IMR-90 (cell line): ENCODE measurements at regions of chr1 and their contacts with region 1.

Region 1: DNA sequence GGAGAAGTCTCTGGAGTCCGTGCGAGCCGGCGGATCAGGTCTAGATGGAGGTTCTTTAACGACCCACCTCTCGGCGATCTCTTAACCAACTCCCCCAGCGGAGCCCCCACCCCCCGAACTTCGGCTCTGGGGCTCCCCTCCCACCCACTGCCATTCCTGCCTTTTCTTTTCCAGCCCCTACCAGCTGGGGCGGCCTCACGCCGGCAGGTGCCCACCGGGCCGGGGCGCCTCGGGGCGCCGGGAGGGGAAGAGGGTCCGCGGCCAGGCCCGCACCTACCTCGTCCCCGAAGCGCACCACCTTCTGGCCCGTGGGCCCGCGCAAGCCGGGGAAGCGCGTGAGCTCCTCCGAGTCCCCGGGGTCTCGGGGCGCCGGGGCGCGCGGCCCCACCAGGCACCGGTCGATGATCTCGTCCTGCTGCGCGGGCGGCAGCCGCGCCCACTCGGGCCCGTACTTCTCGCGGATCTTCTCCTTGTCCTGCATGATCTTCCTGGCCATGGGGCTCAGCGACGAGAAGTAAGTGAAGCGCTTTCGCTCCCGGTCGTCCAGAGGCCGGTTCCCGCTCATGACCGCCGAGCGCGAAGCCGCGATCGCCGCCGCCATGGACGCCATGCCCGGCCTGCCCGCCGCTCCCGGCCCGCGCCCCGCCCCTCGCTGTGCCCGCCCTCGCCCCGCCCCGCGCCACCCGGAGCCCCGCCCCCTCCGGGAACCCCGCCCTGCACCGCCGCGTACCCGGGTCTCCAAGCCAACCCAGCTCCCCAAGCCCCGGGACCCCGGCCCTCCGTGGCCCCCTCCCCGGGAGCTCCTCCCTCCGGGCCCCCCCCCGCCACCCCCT is at the start of gene C1orf198:
- DNase-seq: no peak
- ATAC-seq: peak; percentile 84
- H3K4me3 ChIP-seq: peak within 1 kb of the TSS; percentile 100
- H3K27ac ChIP-seq: peak within 1 kb of the TSS; percentile 100
- H3K4me1 ChIP-seq: peaks cover 28% of the 10 kb centered on the region
- H3K27me3 ChIP-seq: no peaks in the 10 kb centered on the region
- CTCF ChIP-seq: no peak
- POLR2A ChIP-seq: 0 out of 2 replicates have a peak, but pooled peaks have one; percentile 48
- RAD21 ChIP-seq: no peak
- total RNA-seq, gene C1orf198: 74.4 and 76.2 TPM in 2 replicates

Region 2: DNA sequence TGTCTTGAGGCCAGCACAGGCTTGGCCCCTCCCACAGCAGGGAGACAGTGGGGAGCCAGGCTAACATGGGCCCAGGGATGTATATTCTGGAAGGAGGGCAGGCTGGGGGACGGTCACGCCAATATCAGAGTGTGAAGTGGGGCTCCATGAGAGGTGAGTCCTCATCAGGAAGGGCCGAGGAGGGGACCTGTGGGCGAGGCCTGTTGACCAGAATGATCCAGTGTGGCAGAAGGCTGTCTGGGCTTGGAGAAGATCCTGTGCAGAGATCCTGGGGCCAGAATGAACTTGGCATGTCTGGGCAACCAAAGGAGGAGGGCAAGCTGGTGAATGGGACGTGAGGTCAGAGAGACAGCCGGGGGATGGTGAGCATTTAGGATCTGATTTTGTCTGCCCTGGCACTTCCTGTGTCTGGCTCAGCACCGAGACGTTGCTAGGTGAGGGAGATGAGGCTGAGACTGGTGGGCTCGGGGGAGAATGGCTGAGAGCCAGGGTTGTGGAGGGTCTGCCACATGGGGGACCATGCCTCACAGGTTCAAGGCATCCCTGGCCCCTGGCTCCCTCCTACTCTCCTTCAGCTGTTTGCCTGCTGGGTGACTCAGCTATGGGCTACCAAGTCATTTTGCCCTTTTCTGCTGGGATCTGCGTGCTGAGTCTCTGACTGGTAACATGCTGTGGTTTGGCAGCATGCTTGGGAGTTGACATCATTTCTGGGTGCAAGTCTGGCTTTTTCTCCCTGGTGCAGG is 783.8 kb before region 1 on chr1:
- CTCF ChIA-PET with region 1: no interaction called
- POLR2A ChIA-PET with region 1: no interaction called
- dilution Hi-C with region 1: no loop called
- in situ Hi-C with region 1: loop called (anchors 25 kb)
- intact Hi-C with region 1: no loop called
- DNase-seq: peak; percentile 99
- ATAC-seq: peak; percentile 95
- H3K4me3 ChIP-seq: no peak overlapping the region
- H3K27ac ChIP-seq: peak overlapping the region; percentile 94
- H3K4me1 ChIP-seq: peaks cover 37% of the 10 kb centered on the region
- H3K27me3 ChIP-seq: no peaks in the 10 kb centered on the region
- CTCF ChIP-seq: peak; percentile 5; the same call in 1 of the 2 replicates
- POLR2A ChIP-seq: no peak; the same call in 1 of the 2 replicates
- RAD21 ChIP-seq: peak; percentile 13

Region 3: GRCh38 chr1:230327892-230328284 is 540.2 kb before region 1 on chr1:
- CTCF ChIA-PET with region 1: no interaction called
- POLR2A ChIA-PET with region 1: no interaction called
- dilution Hi-C with region 1: no loop called
- in situ Hi-C with region 1: no loop called
- intact Hi-C with region 1: no loop called
- DNase-seq: no peak
- ATAC-seq: no peak
- H3K4me3 ChIP-seq: no peak overlapping the region
- H3K27ac ChIP-seq: no peak overlapping the region
- H3K4me1 ChIP-seq: no peaks in the 10 kb centered on the region
- H3K27me3 ChIP-seq: no peaks in the 10 kb centered on the region
- CTCF ChIP-seq: no peak
- POLR2A ChIP-seq: no peak
- RAD21 ChIP-seq: no peak

Region 4: DNA sequence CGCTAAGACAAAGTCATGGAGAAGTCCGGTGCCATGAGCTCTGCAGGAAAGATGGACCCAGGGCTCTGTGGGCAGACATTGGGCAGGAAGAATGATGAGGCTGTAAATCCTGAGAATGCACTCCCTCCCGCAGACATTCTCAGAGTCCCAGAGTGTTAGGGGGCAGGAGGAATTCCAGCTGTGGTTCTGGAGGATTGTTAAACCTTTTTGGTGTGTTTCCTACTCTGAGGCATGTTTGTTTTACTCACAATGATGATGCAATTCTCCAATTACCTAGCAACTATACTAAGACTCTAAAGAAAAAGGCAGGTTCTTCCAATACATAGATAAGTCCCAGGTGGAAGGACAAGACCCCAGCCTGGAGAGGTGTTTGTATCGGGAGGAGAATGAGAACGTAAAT is 123.7 kb before region 1 on chr1:
- CTCF ChIA-PET with region 1: no interaction called
- POLR2A ChIA-PET with region 1: no interaction called
- dilution Hi-C with region 1: no loop called
- in situ Hi-C with region 1: no loop called
- intact Hi-C with region 1: no loop called
- DNase-seq: peak; percentile 36
- ATAC-seq: peak; percentile 70
- H3K4me3 ChIP-seq: no peak overlapping the region
- H3K27ac ChIP-seq: no peak overlapping the region
- H3K4me1 ChIP-seq: peaks cover 9% of the 10 kb centered on the region; the same call in 1 of the 2 replicates
- H3K27me3 ChIP-seq: peaks cover 5% of the 10 kb centered on the region; the same call in 1 of the 2 replicates
- CTCF ChIP-seq: no peak
- POLR2A ChIP-seq: no peak
- RAD21 ChIP-seq: no peak

Region 5: DNA sequence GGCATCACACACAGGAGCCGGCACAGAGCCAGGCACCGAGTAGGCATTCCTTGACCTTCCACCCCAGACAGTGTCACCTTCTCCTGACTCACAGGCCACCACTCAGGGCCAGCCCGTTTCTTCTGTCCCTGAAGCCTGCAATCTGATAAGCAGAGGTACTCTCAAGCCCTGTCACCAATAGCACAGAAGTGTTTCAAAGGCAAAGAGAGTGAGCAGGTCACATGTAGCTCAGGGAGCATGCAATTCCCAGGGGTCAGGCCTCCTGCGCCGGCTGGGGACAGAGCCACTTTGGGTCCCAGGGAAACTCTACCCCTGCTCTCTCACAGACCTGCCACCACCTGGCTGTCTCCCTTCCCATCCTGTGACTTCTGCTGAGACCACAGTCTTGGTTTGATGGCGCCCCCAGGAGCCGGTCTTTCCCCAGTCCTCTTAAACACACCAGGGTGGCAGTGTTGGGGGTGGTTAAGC is 107.7 kb before region 1 on chr1:
- CTCF ChIA-PET with region 1: no interaction called
- POLR2A ChIA-PET with region 1: no interaction called
- dilution Hi-C with region 1: no loop called
- in situ Hi-C with region 1: no loop called
- intact Hi-C with region 1: no loop called
- DNase-seq: no peak
- ATAC-seq: no peak
- H3K4me3 ChIP-seq: no peak overlapping the region
- H3K27ac ChIP-seq: no peak overlapping the region
- H3K4me1 ChIP-seq: no peaks in the 10 kb centered on the region; the same call in 1 of the 2 replicates
- H3K27me3 ChIP-seq: peaks cover 20% of the 10 kb centered on the region
- CTCF ChIP-seq: no peak
- POLR2A ChIP-seq: no peak
- RAD21 ChIP-seq: no peak

Region 6: GRCh38 chr1:230797942-230798418 is 70.1 kb before region 1 on chr1:
- CTCF ChIA-PET with region 1: interaction called, 4 read pairs
- POLR2A ChIA-PET with region 1: no interaction called
- dilution Hi-C with region 1: no loop called
- in situ Hi-C with region 1: no loop called
- intact Hi-C with region 1: loop called (anchors 1 kb)
- DNase-seq: peak; percentile 73
- ATAC-seq: peak; percentile 93
- H3K4me3 ChIP-seq: no peak overlapping the region
- H3K27ac ChIP-seq: no peak overlapping the region
- H3K4me1 ChIP-seq: no peaks in the 10 kb centered on the region
- H3K27me3 ChIP-seq: no peaks in the 10 kb centered on the region
- CTCF ChIP-seq: peak; percentile 89
- POLR2A ChIP-seq: no peak
- RAD21 ChIP-seq: peak; percentile 97

Region 7: DNA sequence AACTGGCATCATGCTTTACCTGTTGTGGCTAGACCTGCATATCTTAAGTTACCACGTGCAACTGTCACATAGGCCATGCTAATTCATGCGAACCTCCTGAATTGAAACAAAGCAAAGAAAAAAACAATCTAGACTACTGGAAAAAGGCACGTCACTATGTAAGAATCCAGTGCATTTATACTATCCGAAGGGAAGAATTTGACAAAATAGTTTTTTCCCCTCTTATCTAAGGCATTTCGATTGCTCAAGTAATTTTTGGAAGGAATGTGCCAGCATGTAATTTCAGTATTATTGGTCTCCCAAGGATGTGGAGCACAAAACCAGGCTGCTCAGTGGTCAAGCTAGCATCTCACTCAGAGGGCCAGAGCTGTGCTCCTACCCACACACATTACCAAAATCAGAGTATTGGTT is 31.7 kb after region 1 on chr1:
- CTCF ChIA-PET with region 1: no interaction called
- POLR2A ChIA-PET with region 1: interaction called, 7 read pairs
- dilution Hi-C with region 1: no loop called
- in situ Hi-C with region 1: no loop called
- intact Hi-C with region 1: loop called (anchors 1 kb)
- DNase-seq: peak; percentile 89
- ATAC-seq: peak; percentile 89
- H3K4me3 ChIP-seq: no peak overlapping the region
- H3K27ac ChIP-seq: peak overlapping the region; percentile 85
- H3K4me1 ChIP-seq: peaks cover 9% of the 10 kb centered on the region
- H3K27me3 ChIP-seq: no peaks in the 10 kb centered on the region
- CTCF ChIP-seq: no peak
- POLR2A ChIP-seq: no peak
- RAD21 ChIP-seq: no peak

Region 8: DNA sequence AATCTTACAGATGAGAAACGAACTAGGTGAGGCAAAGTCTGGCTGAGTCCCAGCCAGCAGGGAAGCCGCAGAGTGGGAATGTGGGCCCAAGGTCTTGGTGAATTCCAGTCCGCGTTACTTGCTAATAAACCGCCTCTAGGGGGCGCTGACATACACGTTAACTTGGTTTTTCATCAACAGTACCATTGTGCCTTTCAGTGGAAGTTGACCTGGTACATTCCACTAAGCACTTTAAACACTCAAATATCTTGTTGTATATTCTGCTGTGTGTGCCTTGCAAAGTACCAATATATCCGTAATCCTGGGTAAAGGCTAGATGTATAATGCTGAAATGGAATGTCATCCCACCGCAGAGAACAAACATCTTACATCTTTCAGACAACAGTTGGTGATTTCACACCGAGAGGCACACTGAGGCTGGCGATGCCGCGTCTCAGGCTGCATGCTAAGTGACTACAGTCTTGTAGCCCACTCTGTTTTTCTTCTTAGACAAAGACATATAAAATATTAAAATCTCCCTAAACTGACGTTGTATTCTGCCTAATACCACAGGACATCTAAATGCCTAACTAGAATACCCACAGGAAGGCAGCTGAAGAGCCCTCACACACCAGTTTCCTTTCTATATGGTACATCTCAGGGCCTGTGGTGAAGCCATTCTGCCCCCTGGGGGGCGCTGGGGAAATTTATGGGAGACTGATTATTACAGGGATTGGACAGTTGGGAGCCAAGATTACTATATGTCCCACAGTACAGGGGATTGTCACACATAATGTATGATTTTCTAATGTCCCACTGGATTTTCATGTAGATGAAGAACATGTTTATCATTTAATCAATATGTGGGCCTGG is 49.4 kb after region 1 on chr1:
- CTCF ChIA-PET with region 1: interaction called, 3 read pairs
- POLR2A ChIA-PET with region 1: no interaction called
- dilution Hi-C with region 1: no loop called
- in situ Hi-C with region 1: no loop called
- intact Hi-C with region 1: loop called (anchors 1 kb)
- DNase-seq: peak; percentile 67
- ATAC-seq: peak; percentile 91
- H3K4me3 ChIP-seq: no peak overlapping the region
- H3K27ac ChIP-seq: no peak overlapping the region
- H3K4me1 ChIP-seq: peaks cover 6% of the 10 kb centered on the region; the same call in 1 of the 2 replicates
- H3K27me3 ChIP-seq: no peaks in the 10 kb centered on the region
- CTCF ChIP-seq: peak; percentile 89
- POLR2A ChIP-seq: 0 out of 2 replicates have a peak, but pooled peaks have one; percentile 31
- RAD21 ChIP-seq: peak; percentile 94

Region 9: DNA sequence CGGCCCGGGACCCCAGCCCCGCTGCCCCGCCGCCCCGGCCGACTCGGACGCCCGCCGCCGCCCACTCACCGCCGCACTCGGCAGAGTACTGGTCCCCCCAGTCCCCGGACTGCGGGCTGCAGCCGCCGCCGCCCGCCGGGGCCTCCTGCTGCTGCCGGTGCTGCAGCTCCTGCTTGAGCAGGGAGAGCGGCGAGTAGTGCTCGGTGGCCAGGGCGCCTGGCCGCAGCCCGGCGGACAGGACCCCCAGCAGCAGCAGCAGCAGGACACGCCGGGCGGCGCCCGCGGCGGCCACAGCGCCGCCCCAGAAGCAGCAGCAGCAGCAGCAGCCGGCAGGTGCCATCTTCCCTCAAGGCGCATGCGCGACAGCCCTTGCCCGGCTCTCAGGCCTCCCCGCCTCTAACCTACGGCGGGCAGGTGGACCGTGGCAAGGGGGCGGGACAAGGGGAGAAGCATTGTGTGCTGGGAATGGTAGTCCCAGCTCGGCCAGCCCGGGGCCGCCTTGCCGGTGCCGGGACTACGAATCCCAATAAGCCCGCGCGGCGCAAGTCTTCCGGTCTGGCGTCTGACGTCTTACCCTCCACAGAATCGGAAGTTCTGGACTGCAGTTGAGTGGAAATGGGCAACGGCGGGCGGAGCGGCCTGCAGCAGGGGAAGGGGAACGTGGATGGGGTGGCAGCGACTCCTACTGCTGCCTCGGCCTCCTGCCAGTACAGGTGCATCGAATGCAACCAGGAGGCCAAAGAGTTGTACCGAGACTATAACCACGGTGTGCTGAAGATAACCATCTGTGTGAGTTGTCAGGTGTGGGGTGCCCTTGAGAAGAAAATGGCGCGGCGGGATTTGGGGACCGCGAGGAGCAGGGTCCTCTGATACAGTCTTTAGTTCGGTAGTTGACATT is 110.6 kb after region 1 on chr1 and contains the starts of genes ARV1 and TTC13:
- CTCF ChIA-PET with region 1: no interaction called
- POLR2A ChIA-PET with region 1: no interaction called
- dilution Hi-C with region 1: no loop called
- in situ Hi-C with region 1: no loop called
- intact Hi-C with region 1: loop called (anchors 2 kb)
- DNase-seq: peak; percentile 98
- ATAC-seq: peak; percentile 99
- H3K4me3 ChIP-seq: peak within 1 kb of the TSS; percentile 68
- H3K27ac ChIP-seq: peak within 1 kb of the TSS; percentile 71
- H3K4me1 ChIP-seq: peaks cover 6% of the 10 kb centered on the region
- H3K27me3 ChIP-seq: no peaks in the 10 kb centered on the region
- CTCF ChIP-seq: peak; percentile 13; the same call in 1 of the 2 replicates
- POLR2A ChIP-seq: 0 out of 2 replicates have a peak, but pooled peaks have one; percentile 26
- RAD21 ChIP-seq: peak; percentile 25
- total RNA-seq, gene ARV1: 19.0 and 26.7 TPM in 2 replicates
- total RNA-seq, gene TTC13: 8.9 and 9.1 TPM in 2 replicates

Region 10: GRCh38 chr1:231040019-231040799 is 172.1 kb after region 1 on chr1 and contains the start of gene FAM89A:
- CTCF ChIA-PET with region 1: no interaction called
- POLR2A ChIA-PET with region 1: no interaction called
- dilution Hi-C with region 1: no loop called
- in situ Hi-C with region 1: no loop called
- intact Hi-C with region 1: loop called (anchors 5 kb)
- DNase-seq: no peak
- ATAC-seq: peak; percentile 87
- H3K4me3 ChIP-seq: peak within 1 kb of the TSS; percentile 74
- H3K27ac ChIP-seq: peak within 1 kb of the TSS; percentile 11; the same call in 1 of the 2 replicates
- H3K4me1 ChIP-seq: peaks cover 7% of the 10 kb centered on the region; the same call in 1 of the 2 replicates
- H3K27me3 ChIP-seq: peaks cover 7% of the 10 kb centered on the region; the same call in 1 of the 2 replicates
- CTCF ChIP-seq: no peak
- POLR2A ChIP-seq: no peak
- RAD21 ChIP-seq: no peak
- total RNA-seq, gene FAM89A: 6.8 and 7.5 TPM in 2 replicates

Region 11: DNA sequence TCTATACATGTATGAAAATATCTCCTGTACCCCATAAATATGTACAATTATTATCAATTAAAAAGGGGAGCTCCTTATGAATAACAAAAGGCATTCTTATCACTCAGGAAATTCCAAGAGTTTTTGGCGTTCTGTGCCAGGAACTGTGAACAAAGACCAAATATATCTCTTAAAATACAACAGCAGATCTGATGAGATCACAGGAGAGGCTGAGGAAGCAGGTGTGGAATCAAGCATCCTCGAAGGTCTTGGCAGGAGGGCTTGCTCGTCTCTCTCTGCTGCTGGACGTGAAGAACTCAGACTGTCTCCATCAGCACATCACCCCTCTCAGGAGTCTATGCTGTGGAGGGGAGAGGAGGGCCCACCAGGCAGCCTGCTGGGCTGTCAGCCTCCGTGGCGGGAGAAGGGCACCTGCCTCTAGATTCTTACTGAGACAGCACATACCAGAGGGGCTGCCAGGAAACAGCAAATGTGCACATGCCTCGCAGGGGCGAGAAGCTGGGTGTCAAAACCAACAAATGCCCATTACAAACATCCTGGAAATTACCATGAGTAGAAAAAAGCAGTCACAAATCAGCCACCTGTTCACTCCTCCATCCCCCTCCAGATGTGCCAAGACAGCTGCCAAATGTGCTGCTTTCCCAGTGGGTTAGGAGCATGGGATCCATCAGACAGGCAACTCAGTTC is 202.8 kb after region 1 on chr1:
- CTCF ChIA-PET with region 1: no interaction called
- POLR2A ChIA-PET with region 1: no interaction called
- dilution Hi-C with region 1: no loop called
- in situ Hi-C with region 1: no loop called
- intact Hi-C with region 1: no loop called
- DNase-seq: no peak
- ATAC-seq: no peak
- H3K4me3 ChIP-seq: no peak overlapping the region
- H3K27ac ChIP-seq: no peak overlapping the region
- H3K4me1 ChIP-seq: no peaks in the 10 kb centered on the region
- H3K27me3 ChIP-seq: peaks cover 10% of the 10 kb centered on the region
- CTCF ChIP-seq: no peak
- POLR2A ChIP-seq: no peak
- RAD21 ChIP-seq: no peak